Panc1 (cell line): ENCODE measurements at regions of chr10 and their contacts with region 1.

Region 1: GRCh38 chr10:94439275-94439861 is 37.0 kb downstream of the TBC1D12 start:
- DNase-seq: no peak
- ATAC-seq: peak; percentile 79
- H3K4me3 ChIP-seq: no peak overlapping the region
- H3K27ac ChIP-seq: 0 out of 2 replicates have a peak overlapping the region, but pooled peaks have one; percentile 10
- H3K4me1 ChIP-seq: peaks cover 20% of the 10 kb centered on the region
- H3K27me3 ChIP-seq: no peaks in the 10 kb centered on the region
- CTCF ChIP-seq: peak; percentile 28; the same call in 1 of the 2 replicates

Region 2: DNA sequence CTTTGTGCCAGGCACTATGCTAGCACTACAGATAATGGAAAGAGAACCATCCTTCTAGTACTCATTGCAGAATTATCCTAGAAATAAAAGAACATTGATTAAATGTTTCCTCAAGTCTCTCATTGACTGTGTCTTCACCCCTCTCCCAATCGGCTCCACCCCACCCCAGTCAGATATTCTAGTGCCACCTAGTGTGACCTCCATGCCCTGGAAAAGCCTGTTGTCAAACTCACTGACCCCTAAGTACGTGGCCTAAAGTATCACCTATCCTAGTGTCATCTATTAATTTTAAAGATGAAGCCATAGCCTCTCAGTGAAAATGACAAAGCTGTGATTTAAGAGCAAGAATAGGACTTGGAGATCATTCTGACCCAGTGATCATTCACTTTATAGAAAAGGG is 655.3 kb before region 1 on chr10:
- CTCF ChIA-PET with region 1: no interaction called
- POLR2A ChIA-PET with region 1: no interaction called
- in situ Hi-C with region 1: no loop called
- intact Hi-C with region 1: no loop called
- DNase-seq: no peak
- ATAC-seq: no peak
- H3K4me3 ChIP-seq: no peak overlapping the region
- H3K27ac ChIP-seq: no peak overlapping the region
- H3K4me1 ChIP-seq: no peaks in the 10 kb centered on the region
- H3K27me3 ChIP-seq: peaks cover 2% of the 10 kb centered on the region; the same call in 1 of the 2 replicates
- CTCF ChIP-seq: no peak

Region 3: DNA sequence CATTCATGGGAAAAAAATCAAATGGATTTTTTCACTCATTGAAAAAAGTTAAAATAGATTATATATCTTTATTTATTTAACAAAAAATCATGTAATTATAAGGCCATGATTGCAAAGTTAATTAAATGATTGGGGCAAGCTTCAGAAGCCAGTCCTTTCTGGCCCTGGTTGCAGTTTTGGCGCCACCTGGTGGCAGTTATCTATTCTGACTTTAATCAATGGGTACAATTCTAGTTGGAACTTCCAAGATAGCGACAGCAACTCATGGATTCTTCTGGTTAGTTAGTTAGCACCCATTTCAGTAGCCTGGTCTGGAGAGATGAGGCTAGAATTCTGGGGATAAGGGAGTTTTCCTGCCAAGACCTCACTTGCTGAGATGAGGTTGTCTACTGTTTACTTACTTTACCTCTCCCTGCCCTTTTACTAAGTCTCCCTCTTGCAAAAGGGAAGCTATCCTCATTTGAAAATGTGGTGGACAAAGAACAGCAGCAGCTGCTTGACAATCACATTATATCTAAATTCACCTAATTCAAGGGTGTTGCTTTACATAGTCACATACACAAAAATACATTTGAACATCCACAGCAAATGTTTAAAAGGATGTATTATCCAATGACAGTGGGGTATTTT is 119.0 kb before region 1 on chr10:
- CTCF ChIA-PET with region 1: interaction called, 13 read pairs
- POLR2A ChIA-PET with region 1: no interaction called
- in situ Hi-C with region 1: no loop called
- intact Hi-C with region 1: no loop called
- DNase-seq: peak; percentile 60
- ATAC-seq: peak; percentile 74
- H3K4me3 ChIP-seq: no peak overlapping the region
- H3K27ac ChIP-seq: no peak overlapping the region
- H3K4me1 ChIP-seq: no peaks in the 10 kb centered on the region
- H3K27me3 ChIP-seq: no peaks in the 10 kb centered on the region
- CTCF ChIP-seq: peak; percentile 96

Region 4: DNA sequence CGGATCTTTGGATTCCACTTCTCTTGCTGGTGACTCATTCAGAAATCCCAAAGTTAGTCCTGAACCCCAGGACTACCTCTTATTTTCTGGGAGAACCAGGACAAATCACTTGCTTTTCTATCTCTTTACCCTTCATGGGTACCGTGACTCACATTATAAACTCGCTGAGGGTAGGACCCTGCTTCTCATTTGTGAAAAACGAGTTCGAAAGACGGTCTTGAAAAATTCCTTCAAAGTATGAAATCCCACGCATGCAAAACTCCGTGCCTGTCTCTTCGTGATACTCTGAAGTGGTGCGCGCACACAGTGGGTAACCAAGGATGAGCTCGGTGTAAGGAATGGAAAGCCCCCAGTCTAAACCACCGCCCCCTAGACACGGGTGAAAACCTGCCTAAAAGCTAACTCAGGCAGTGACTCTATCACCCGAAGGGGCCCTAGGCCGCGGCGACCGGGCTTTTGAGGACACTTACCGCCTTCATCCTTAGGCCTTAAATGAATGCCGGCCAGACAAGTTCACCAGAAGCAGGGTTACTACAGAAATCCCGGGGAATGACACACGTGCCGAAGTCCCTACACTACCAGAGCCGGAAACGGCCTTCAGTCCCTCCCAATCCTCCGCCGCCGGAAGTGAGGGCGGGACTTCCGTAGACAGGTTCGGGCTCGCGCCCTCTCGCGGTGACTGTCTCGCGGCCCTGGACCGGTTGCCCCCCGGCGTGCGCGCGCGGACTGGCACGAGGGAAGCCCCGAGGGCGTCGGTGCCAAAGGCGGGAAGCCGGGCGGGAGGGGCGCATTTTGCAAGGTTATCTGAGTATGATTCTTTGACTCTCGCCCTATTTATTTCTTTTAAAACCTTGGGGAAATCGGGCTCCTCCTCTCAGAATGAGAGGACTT is 76.8 kb before region 1 on chr10 and contains the start of gene NOC3L:
- CTCF ChIA-PET with region 1: interaction called, 3 read pairs
- POLR2A ChIA-PET with region 1: interaction called, 8 read pairs
- in situ Hi-C with region 1: no loop called
- intact Hi-C with region 1: loop called (anchors 5 kb)
- DNase-seq: peak; percentile 78
- ATAC-seq: peak; percentile 100
- H3K4me3 ChIP-seq: peak within 1 kb of the TSS; percentile 83 to 86
- H3K27ac ChIP-seq: peak within 1 kb of the TSS; percentile 98
- H3K4me1 ChIP-seq: peaks cover 25% of the 10 kb centered on the region
- H3K27me3 ChIP-seq: no peaks in the 10 kb centered on the region
- CTCF ChIP-seq: peak; percentile 97
- total RNA-seq, gene NOC3L: 41.2 TPM

Region 5: DNA sequence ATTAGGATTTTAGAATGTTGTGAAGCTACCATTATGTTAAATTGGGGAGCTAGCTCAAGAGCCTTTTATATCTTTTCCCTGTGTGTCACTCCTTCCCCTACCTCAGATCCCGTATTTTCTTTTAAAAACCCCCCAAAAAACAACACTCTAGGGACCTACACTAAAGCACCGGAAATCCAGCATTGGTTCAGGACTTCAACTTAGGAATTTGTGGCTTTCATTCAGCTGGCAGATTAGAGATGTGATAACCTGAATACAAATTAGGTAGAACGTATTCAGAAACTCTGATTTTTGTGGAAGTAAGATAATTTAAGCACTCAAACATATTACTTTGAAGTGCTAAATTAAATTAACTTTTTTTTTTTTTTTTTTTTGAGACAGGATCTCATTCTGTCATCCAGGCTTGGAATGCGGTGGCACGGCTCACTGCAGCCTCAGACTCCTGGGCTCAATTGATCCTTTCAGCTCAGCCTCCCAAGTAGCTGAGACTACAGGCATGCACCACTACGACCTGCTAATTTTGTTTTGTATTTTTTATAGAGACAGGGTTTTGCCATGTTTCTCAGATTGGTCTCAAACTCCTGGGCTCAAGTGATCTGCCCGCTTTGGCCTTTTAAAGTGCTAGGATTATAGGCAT is 30.2 kb before region 1 on chr10:
- CTCF ChIA-PET with region 1: interaction called, 6 read pairs
- POLR2A ChIA-PET with region 1: interaction called, 4 read pairs
- in situ Hi-C with region 1: no loop called
- intact Hi-C with region 1: loop called (anchors 5 kb)
- DNase-seq: no peak
- ATAC-seq: no peak
- H3K4me3 ChIP-seq: no peak overlapping the region
- H3K27ac ChIP-seq: no peak overlapping the region
- H3K4me1 ChIP-seq: peaks cover 60% of the 10 kb centered on the region
- H3K27me3 ChIP-seq: no peaks in the 10 kb centered on the region
- CTCF ChIP-seq: no peak

Region 6: GRCh38 chr10:94465684-94466083 is 26.3 kb after region 1 on chr10:
- CTCF ChIA-PET with region 1: interaction called, 12 read pairs
- POLR2A ChIA-PET with region 1: no interaction called
- in situ Hi-C with region 1: no loop called
- intact Hi-C with region 1: no loop called
- DNase-seq: no peak
- ATAC-seq: no peak
- H3K4me3 ChIP-seq: no peak overlapping the region
- H3K27ac ChIP-seq: no peak overlapping the region
- H3K4me1 ChIP-seq: no peaks in the 10 kb centered on the region
- H3K27me3 ChIP-seq: no peaks in the 10 kb centered on the region
- CTCF ChIP-seq: no peak